Naive thymus-derived CD4-positive, alpha-beta T cell (primary cell): ENCODE measurements at regions of chr6 and their contacts with region 1.

Region 1: DNA sequence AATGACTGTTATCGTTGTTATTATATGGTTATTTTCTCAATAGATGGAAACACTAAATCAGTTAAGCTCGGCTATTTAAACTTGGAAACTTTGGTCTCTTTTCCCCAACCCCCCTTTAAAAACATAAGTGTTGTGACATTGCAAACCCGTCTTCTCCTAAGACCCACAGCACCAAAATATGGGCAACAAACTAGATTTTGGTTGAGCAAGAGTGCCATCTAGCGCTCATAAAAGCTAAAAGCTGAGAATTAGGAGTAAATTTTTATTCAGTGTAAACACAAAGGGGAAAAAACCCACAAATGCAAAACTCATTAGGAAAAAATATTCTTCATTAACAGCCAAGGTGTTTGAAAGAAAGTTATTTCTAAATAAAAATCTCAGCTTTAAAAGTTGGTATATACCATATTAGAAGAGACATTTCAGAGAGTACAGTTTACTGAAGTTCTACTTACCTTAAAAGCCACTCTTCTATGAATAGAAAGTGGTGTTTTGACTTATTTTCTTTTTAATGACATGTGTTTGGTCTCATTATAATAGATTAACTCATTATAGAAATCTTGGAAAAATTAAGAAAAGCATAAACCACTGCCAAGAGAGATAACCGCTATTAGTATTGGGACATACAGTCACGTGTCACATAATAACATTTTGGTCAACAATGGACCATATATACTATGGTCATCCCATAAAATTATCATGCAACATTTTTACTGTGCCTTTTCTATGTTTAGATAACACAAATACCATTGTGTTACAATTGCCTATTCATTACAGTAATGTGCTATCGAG is 21.1 kb downstream of the SESN1 start:
- DNase-seq: peak in 7 of 9 donors; percentile 56 to 78 (median 72)
- ATAC-seq: peak; percentile 85
- H3K4me3 ChIP-seq: no peak overlapping the region
- H3K4me3 Mint-ChIP-seq: peak overlapping the region in 8 of 10 donors; percentile 1 to 64 (median 24)
- H3K27ac ChIP-seq: no peak overlapping the region
- H3K27ac Mint-ChIP-seq: peak overlapping the region in 4 of 9 donors; percentile 1 to 44 (median 4)
- H3K4me1 ChIP-seq: peaks cover 18 to 39% of the 10 kb centered on the region in 2 donors
- H3K4me1 Mint-ChIP-seq: peaks cover 15 to 37% (median 22%) of the 10 kb centered on the region in 7 donors
- H3K27me3 ChIP-seq: no peaks in the 10 kb centered on the region
- H3K27me3 Mint-ChIP-seq: peaks cover 0 to 12% (median 0%) of the 10 kb centered on the region in 5 donors

Region 2: GRCh38 chr6:108541838-108542759 is 531.4 kb before region 1 on chr6:
- CTCF ChIA-PET with region 1: interaction called, 143 read pairs
- POLR2A ChIA-PET with region 1: no interaction called
- intact Hi-C with region 1: loop called (anchors 1 kb)
- DNase-seq: peak in 8 of 9 donors; percentile 41 to 77 (median 70)
- ATAC-seq: peak; percentile 84
- H3K4me3 ChIP-seq: no peak overlapping the region
- H3K4me3 Mint-ChIP-seq: peak overlapping the region in 7 of 10 donors; percentile 2 to 67 (median 31)
- H3K27ac ChIP-seq: no peak overlapping the region
- H3K27ac Mint-ChIP-seq: peak overlapping the region in 1 of 9 donors; percentile 33
- H3K4me1 ChIP-seq: peaks cover 8 to 11% of the 10 kb centered on the region in 2 donors
- H3K4me1 Mint-ChIP-seq: peaks cover 7 to 18% (median 8%) of the 10 kb centered on the region in 7 donors
- H3K27me3 ChIP-seq: no peaks in the 10 kb centered on the region
- H3K27me3 Mint-ChIP-seq: peaks cover 0 to 52% (median 6%) of the 10 kb centered on the region in 5 donors

Region 3: GRCh38 chr6:108835218-108835850 is 238.2 kb before region 1 on chr6:
- CTCF ChIA-PET with region 1: interaction called, 26 read pairs
- POLR2A ChIA-PET with region 1: interaction called, 4 read pairs
- intact Hi-C with region 1: loop called (anchors 1 kb)
- DNase-seq: peak; percentile 65 to 82 (median 76)
- ATAC-seq: peak; percentile 98
- H3K4me3 ChIP-seq: no peak overlapping the region
- H3K4me3 Mint-ChIP-seq: no peak overlapping the region
- H3K27ac ChIP-seq: no peak overlapping the region
- H3K27ac Mint-ChIP-seq: peak overlapping the region in 6 of 9 donors; percentile 27 to 52 (median 48)
- H3K4me1 ChIP-seq: peaks cover 9 to 18% of the 10 kb centered on the region in 2 donors
- H3K4me1 Mint-ChIP-seq: peaks cover 14 to 30% (median 22%) of the 10 kb centered on the region in 7 donors
- H3K27me3 ChIP-seq: no peaks in the 10 kb centered on the region
- H3K27me3 Mint-ChIP-seq: peaks cover 0 to 44% (median 0%) of the 10 kb centered on the region in 5 donors

Region 4: DNA sequence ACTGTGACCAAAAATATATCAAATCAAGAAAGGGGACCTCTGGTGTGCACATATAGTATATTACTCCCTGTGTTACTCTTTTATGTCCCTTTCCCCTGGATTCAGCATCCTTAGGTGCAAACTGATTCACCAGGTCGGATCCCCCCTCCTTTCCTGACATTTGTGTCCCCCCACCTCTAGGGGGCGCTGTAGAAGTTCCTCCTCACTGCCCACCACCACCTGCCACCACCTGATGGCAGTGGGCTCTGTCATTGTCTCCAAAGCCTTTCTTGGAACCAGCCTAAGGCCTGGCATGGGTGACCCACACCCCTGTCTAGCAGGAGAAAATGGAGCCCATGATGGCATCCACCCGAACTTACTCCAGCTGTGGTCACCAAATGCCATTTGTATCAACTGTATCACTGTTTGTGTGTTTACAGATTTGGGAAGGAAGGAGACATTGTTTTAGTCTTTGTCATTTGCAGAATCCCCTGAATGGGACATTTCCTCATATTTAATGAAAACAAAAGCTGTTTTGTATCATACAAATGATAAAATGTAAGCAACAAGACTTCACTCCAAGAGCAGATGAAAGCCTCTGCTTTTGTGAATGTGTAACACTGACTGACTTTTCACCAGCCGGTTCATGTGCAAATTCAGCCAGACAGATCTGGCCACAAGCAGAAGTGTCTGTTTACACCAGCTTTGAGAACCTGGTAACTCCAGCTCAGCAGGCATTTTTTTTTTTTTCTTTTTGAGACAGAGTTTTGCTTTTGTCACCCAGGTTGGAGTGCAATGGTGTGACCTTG is 159.1 kb before region 1 on chr6:
- CTCF ChIA-PET with region 1: interaction called, 4 read pairs
- POLR2A ChIA-PET with region 1: no interaction called
- intact Hi-C with region 1: loop called (anchors 1 kb)
- DNase-seq: peak in 8 of 9 donors; percentile 6 to 44 (median 35)
- ATAC-seq: peak; percentile 58
- H3K4me3 ChIP-seq: no peak overlapping the region
- H3K4me3 Mint-ChIP-seq: no peak overlapping the region
- H3K27ac ChIP-seq: no peak overlapping the region
- H3K27ac Mint-ChIP-seq: peak overlapping the region in 2 of 9 donors; percentile 28 to 31
- H3K4me1 ChIP-seq: no peaks in the 10 kb centered on the region
- H3K4me1 Mint-ChIP-seq: peaks cover 0 to 9% (median 3%) of the 10 kb centered on the region in 7 donors
- H3K27me3 ChIP-seq: no peaks in the 10 kb centered on the region
- H3K27me3 Mint-ChIP-seq: peaks cover 0 to 47% (median 0%) of the 10 kb centered on the region in 5 donors

Region 5: GRCh38 chr6:109050012-109050411 is 23.5 kb before region 1 on chr6:
- CTCF ChIA-PET with region 1: interaction called, 13 read pairs
- POLR2A ChIA-PET with region 1: interaction called, 3 read pairs
- intact Hi-C with region 1: no loop called
- DNase-seq: no peak
- ATAC-seq: no peak
- H3K4me3 ChIP-seq: no peak overlapping the region
- H3K4me3 Mint-ChIP-seq: no peak overlapping the region
- H3K27ac ChIP-seq: no peak overlapping the region
- H3K27ac Mint-ChIP-seq: no peak overlapping the region
- H3K4me1 ChIP-seq: peaks cover 0 to 14% of the 10 kb centered on the region in 2 donors
- H3K4me1 Mint-ChIP-seq: peaks cover 4 to 58% (median 28%) of the 10 kb centered on the region in 7 donors
- H3K27me3 ChIP-seq: no peaks in the 10 kb centered on the region
- H3K27me3 Mint-ChIP-seq: peaks cover 0 to 26% (median 0%) of the 10 kb centered on the region in 5 donors